Heart right ventricle (tissue), 16 donors: ENCODE measurements at regions of chr2 and their contacts with region 1.

Region 1: DNA sequence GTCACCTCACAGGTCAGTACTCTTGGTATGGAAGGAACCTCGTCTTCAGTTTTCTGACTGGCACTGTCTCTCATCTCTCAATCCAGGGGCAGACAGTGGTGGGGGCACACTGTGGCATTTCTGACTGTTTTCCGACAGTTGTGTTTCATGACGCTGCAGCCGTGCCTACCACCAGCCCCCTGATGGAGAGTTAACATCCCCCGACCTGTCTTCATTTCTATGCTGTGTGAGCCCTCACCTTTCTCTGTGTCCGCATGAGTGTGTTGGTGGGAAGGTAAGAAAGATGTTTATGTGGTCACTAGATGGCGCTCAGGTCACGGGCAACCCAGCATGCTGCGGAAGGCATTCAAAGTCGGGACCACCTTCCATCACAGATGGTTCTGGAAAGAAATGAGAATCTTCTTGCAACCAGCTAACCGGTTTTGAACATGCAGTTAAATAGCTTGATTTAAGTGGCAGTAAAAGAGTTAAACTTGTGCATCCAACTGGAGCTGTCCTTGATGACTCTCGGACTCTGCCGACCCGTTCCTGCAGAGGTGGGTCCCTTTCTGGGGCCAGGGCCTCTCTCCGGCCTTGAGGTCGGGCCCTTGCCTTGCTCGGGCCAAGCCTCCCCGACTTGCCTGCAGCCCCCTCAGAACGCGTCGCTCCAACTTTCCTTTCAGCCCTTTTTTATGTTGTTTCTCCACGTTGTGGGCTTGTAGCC is 92.4 kb downstream of the DYSF start:
- DNase-seq: peak in 1 of 2 donors; percentile 55
- ATAC-seq: peak; percentile 59 to 83 (median 78)
- H3K4me3 ChIP-seq: peak overlapping the region in 6 of 10 donors; percentile 15 to 30 (median 24)
- H3K27ac ChIP-seq: peak overlapping the region in 9 of 10 donors; percentile 34 to 79 (median 71)
- H3K4me1 ChIP-seq: peaks cover 0 to 17% (median 13%) of the 10 kb centered on the region in 9 donors
- H3K27me3 ChIP-seq: no peaks in the 10 kb centered on the region
- CTCF ChIP-seq: peak; percentile 66 to 83 (median 75)

Region 2: DNA sequence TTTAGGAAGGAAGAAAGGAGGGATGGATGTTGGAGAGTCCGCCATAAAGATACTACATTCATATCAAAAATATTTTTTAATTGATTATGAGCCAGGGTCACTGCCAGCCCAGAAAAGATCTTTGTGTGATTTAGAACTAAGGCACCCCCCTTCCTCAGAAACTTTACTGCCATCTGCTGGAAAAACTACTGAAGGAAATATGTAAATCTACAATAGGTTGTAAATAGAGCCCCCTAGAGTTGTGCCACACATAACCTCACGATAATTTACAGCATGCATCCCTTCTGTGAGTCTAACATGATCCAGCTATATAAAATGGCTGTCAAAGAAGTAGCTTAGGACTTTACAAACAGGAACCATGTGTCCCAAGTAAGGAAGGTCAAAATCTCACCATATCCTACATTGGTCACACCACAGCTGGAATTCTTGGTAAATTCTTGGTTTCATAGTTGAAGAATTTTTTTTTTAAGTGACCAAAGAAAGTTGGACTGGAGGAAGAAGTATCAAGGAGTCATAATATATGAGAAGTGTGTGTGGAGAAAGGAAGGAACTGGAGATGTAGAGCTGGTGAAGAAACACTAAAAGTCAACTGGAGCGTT is 449.4 kb after region 1 on chr2:
- intact Hi-C with region 1: loop called in 1 of 10 experiments (anchors 5 kb)
- DNase-seq: no peak
- ATAC-seq: no peak
- H3K4me3 ChIP-seq: no peak overlapping the region
- H3K27ac ChIP-seq: no peak overlapping the region
- H3K4me1 ChIP-seq: no peaks in the 10 kb centered on the region
- H3K27me3 ChIP-seq: peaks cover 0 to 22% (median 6%) of the 10 kb centered on the region in 7 donors
- CTCF ChIP-seq: peak in 8 of 9 donors; percentile 12 to 52 (median 44)

Region 3: DNA sequence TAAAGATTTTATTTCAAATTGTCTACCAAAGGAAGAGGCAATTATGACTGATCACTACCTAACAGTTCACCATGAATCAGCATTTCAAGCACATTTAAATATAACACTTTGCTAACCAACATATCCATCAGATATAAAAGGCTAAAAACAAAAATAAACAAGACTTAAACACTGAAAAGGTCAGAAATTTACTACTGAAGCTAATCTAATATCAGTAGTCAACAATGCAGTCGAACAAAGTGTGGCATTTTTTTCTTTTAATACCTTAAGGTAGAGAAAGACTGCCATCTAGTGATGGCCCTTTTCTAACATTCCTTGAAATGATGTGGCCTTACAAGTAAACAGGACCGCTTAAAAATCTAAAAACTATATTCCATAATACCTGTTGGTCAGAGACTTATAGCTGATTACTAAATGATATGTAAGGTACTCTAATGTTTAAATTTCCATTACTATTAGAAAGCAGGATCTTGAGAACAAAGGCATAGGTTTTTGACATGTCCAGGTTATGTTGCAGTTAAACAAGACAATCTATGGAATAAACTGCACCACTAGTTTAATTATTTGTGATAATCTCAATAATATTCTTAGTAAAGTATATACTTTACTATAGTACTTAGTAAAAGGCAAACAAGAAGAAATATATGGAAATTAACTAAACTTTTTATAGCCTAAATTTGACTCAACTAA is 1200.1 kb after region 1 on chr2:
- intact Hi-C with region 1: loop called in 2 of 10 experiments (anchors 5 to 10 kb)
- DNase-seq: peak in 1 of 2 donors; percentile 13
- ATAC-seq: peak in 5 of 8 donors; percentile 33 to 65 (median 39)
- H3K4me3 ChIP-seq: no peak overlapping the region
- H3K27ac ChIP-seq: no peak overlapping the region
- H3K4me1 ChIP-seq: peaks cover 0 to 63% (median 33%) of the 10 kb centered on the region in 9 donors
- H3K27me3 ChIP-seq: no peaks in the 10 kb centered on the region
- CTCF ChIP-seq: peak; percentile 32 to 82 (median 73)